K562 (cell line): ENCODE measurements at regions of chr20 and their contacts with region 1.

Region 1: GRCh38 chr20:1466211-1467081 is at the start of gene NSFL1C:
- DNase-seq: peak; percentile 84 to 93 (median 88)
- ATAC-seq: peak; percentile 91
- H3K4me3 ChIP-seq: peak within 1 kb of the TSS; percentile 97
- H3K27ac ChIP-seq: peak within 1 kb of the TSS; percentile 94
- H3K4me1 ChIP-seq: peaks cover 18 to 40% of the 10 kb centered on the region in 2 experiments
- H3K27me3 ChIP-seq: no peaks in the 10 kb centered on the region
- CTCF ChIP-seq: peak; percentile 67 to 88 (median 82)
- EP300 ChIP-seq: no peak; the same call in 1 of the 2 replicates
- POLR2A ChIP-seq: peak; percentile 80
- RAD21 ChIP-seq: peak; percentile 34 to 43; a peak in 3 of 4 replicates
- polyA plus RNA-seq, gene NSFL1C: 39.3 to 47.0 TPM

Region 2: GRCh38 chr20:1325173-1326030 is 141.0 kb before region 1 on chr20:
- CTCF ChIA-PET with region 1: no interaction called
- POLR2A ChIA-PET with region 1: interaction called, 8 read pairs
- in situ Hi-C with region 1: no loop called
- intact Hi-C with region 1: loop called (anchors 10 kb)
- DNase-seq: peak; percentile 94 to 97 (median 96)
- ATAC-seq: peak; percentile 96
- H3K4me3 ChIP-seq: peak overlapping the region; percentile 55
- H3K27ac ChIP-seq: peak overlapping the region; percentile 89
- H3K4me1 ChIP-seq: peaks cover 20 to 36% of the 10 kb centered on the region in 2 experiments; a peak in 4 of 5 replicates
- H3K27me3 ChIP-seq: no peaks in the 10 kb centered on the region
- CTCF ChIP-seq: no peak
- EP300 ChIP-seq: no peak
- POLR2A ChIP-seq: peak; percentile 95
- RAD21 ChIP-seq: no peak

Region 3: DNA sequence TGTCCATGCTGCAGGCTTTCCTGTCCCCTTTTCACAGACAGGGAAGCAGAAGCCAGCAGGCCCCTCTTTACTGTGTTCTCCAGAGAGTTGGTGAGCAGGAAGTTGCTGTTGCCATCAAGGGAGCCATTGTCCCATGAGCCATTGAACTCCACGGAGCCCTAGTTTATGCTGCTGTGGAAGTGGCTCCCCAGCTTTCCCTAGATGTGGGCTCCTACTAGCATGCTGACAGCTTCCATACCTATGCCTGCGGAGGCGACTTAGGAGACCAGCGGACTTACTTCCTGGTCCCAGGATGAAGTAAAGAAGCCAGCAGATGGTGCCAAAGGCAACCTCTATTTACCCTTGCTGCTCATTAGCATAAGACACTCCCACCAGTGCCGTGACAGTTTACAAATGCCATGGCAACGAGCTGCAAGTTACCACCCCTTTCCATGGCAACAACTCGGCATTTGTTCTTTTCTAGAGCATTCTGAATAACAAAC is 42.8 kb before region 1 on chr20:
- CTCF ChIA-PET with region 1: no interaction called
- POLR2A ChIA-PET with region 1: interaction called, 3 read pairs
- in situ Hi-C with region 1: no loop called
- intact Hi-C with region 1: loop called (anchors 1 kb)
- DNase-seq: peak; percentile 41 to 84 (median 48)
- ATAC-seq: peak; percentile 99
- H3K4me3 ChIP-seq: no peak overlapping the region
- H3K27ac ChIP-seq: peak overlapping the region; percentile 32
- H3K4me1 ChIP-seq: peaks cover 4 to 15% of the 10 kb centered on the region in 2 experiments; a peak in 3 of 5 replicates
- H3K27me3 ChIP-seq: no peaks in the 10 kb centered on the region
- CTCF ChIP-seq: peak; percentile 58 to 76 (median 69)
- EP300 ChIP-seq: no peak
- POLR2A ChIP-seq: no peak
- RAD21 ChIP-seq: peak; percentile 57 to 74

Region 4: GRCh38 chr20:1685304-1686052 is 219.0 kb after region 1 on chr20:
- CTCF ChIA-PET with region 1: no interaction called
- POLR2A ChIA-PET with region 1: no interaction called
- in situ Hi-C with region 1: no loop called
- intact Hi-C with region 1: no loop called
- DNase-seq: no peak
- ATAC-seq: no peak
- H3K4me3 ChIP-seq: no peak overlapping the region
- H3K27ac ChIP-seq: no peak overlapping the region
- H3K4me1 ChIP-seq: no peaks in the 10 kb centered on the region
- H3K27me3 ChIP-seq: no peaks in the 10 kb centered on the region; a peak in 1 of 5 replicates
- CTCF ChIP-seq: no peak
- EP300 ChIP-seq: no peak
- POLR2A ChIP-seq: no peak
- RAD21 ChIP-seq: no peak